ENCODE measurements at regions of chr13 and their contacts with region 1.

Region 1: DNA sequence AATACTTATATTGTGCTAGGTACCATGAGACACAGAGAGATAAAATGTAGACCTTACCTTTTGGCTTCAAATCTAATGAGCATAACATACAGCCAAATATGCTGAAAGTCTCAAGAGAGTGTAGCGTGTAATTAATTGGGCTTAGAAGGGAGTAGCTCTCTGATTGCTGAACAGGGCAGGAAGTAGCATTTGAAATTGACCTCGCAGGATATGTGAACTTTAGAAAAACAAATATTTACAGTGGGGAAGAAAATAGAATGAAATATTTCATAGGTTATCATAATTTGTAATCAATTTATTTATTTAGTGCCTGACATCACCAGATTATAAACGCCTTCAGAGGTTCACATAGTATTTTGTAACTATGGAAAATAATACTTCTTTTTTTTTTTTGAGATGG is 327.1 kb downstream of the RFC3 start:
- DNase-seq: no peak
- ATAC-seq: no peak
- H3K4me3 ChIP-seq: no peak overlapping the region
- H3K27ac ChIP-seq: no peak overlapping the region
- H3K4me1 ChIP-seq: no peaks in the 10 kb centered on the region
- H3K27me3 ChIP-seq: no peaks in the 10 kb centered on the region
- CTCF ChIP-seq: no peak

Region 2: DNA sequence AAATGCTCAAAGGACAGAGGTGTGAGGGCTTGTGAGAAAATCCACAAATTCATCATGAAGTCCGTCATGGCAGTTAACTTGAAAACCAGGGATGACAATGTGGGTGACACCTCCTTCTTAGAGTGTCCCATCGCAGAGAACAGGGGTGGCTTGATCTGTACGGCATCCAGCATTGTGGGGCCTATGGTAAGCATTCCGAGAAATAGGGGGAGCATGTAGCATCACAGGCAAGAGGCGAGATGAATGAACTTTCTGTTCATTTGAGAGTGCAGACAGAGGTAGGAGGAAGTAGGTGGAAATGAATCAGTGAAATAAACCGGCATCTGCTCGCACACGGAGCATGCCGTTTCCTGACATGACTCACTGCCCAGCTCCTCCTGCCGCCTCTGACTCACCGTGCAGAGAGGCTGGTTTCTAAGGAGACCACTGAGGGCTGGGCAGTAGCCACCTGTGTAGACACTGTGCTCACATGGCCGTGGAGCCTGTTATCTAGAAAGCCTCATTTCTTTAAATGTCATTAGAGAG is 11.8 kb after region 1 on chr13:
- intact Hi-C with region 1: no loop called
- DNase-seq: peak; percentile 18 to 48
- ATAC-seq: peak; percentile 43 to 98 (median 92)
- H3K4me3 ChIP-seq: no peak overlapping the region
- H3K27ac ChIP-seq: peak overlapping the region in 2 of 10 donors; percentile 36 to 51
- H3K4me1 ChIP-seq: peaks cover 0 to 24% (median 17%) of the 10 kb centered on the region in 9 donors
- H3K27me3 ChIP-seq: no peaks in the 10 kb centered on the region
- CTCF ChIP-seq: no peak

Region 3: DNA sequence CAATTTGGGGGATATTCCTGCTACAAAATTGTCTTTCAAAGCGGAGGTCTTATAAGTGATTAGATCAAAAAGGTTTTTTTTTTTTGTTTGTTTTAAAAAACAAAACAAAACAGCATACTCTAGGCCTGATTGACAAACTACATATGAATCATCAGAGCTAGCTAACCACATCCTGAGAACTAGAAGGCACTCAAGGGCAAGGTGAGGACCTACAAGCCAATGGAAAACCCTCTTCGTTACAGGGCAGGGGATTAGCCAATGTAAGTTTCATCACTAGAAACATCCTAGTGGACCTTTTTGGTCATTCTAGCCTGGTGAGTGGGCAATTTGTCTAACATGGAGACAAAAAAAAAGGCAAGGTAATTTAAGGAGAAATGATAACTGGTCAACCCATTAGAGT is 101.4 kb after region 1 on chr13:
- intact Hi-C with region 1: loop called in 1 of 10 experiments (anchors 10 kb)
- DNase-seq: no peak
- ATAC-seq: no peak
- H3K4me3 ChIP-seq: no peak overlapping the region
- H3K27ac ChIP-seq: no peak overlapping the region
- H3K4me1 ChIP-seq: peaks cover 0 to 4% (median 0%) of the 10 kb centered on the region in 9 donors
- H3K27me3 ChIP-seq: no peaks in the 10 kb centered on the region
- CTCF ChIP-seq: no peak

Measured in heart right ventricle (tissue), 16 donors.